K562 (cell line): ENCODE measurements at regions of chr16 and their contacts with region 1.

Region 1: GRCh38 chr16:30874821-30875717 is 18.8 kb downstream of the BCL7C start:
- DNase-seq: peak; percentile 83 to 96 (median 88)
- ATAC-seq: peak; percentile 94
- H3K4me3 ChIP-seq: peak overlapping the region; percentile 77
- H3K27ac ChIP-seq: peak overlapping the region; percentile 88
- H3K4me1 ChIP-seq: peaks cover 13 to 36% of the 10 kb centered on the region in 2 experiments
- H3K27me3 ChIP-seq: no peaks in the 10 kb centered on the region
- CTCF ChIP-seq: peak in 2 of 3 experiments; percentile 5 to 32; a peak in 2 of 6 replicates
- EP300 ChIP-seq: peak; percentile 36; the same call in 1 of the 2 replicates
- POLR2A ChIP-seq: peak; percentile 97
- RAD21 ChIP-seq: peak in 1 of 2 experiments; percentile 6; a peak in 1 of 4 replicates

Region 2: GRCh38 chr16:30382111-30382881 is 492.8 kb before region 1 on chr16 and contains the start of gene SEPTIN1:
- CTCF ChIA-PET with region 1: no interaction called
- POLR2A ChIA-PET with region 1: no interaction called
- in situ Hi-C with region 1: no loop called
- intact Hi-C with region 1: no loop called
- DNase-seq: peak in 1 of 4 experiments; percentile 7
- ATAC-seq: no peak
- H3K4me3 ChIP-seq: no peak within 1 kb of the TSS
- H3K27ac ChIP-seq: peak within 1 kb of the TSS; percentile 91
- H3K4me1 ChIP-seq: peaks cover 34 to 50% of the 10 kb centered on the region in 2 experiments
- H3K27me3 ChIP-seq: no peaks in the 10 kb centered on the region
- CTCF ChIP-seq: no peak
- EP300 ChIP-seq: no peak
- POLR2A ChIP-seq: no peak
- RAD21 ChIP-seq: no peak
- polyA plus RNA-seq, gene SEPTIN1: 0.23 TPM in 1 of 2 experiments, not detected in the other

Region 3: DNA sequence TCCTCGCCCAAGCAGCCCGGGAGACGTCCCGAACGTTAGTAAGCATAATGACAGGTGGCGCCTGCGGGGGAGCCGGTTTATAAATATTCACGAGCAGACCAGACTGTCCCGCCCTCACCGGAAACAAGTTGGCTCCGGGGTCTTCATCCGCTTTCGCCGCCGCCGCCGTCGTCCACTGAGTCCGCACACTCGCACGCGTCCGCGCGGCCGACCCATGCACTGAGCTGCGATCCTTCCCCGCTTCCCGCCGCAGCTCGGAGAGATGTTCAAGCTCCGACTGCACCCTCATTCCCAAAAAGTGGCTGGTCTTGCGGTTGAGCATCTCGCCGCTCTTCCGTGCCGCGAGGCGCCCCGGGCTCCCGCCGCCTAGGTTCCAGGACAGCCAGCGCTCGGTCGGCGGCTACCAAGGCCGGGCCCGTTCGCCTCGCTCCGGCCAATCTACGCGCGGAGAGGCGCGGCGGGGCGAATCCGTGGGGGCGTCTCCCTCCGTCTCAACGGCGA is 113.6 kb before region 1 on chr16:
- CTCF ChIA-PET with region 1: no interaction called
- POLR2A ChIA-PET with region 1: no interaction called
- in situ Hi-C with region 1: no loop called
- intact Hi-C with region 1: no loop called
- DNase-seq: peak; percentile 54 to 81 (median 63)
- ATAC-seq: peak; percentile 70
- H3K4me3 ChIP-seq: peak overlapping the region; percentile 88
- H3K27ac ChIP-seq: peak overlapping the region; percentile 54
- H3K4me1 ChIP-seq: peaks cover 19 to 47% of the 10 kb centered on the region in 2 experiments; a peak in 4 of 5 replicates
- H3K27me3 ChIP-seq: no peaks in the 10 kb centered on the region
- CTCF ChIP-seq: no peak
- EP300 ChIP-seq: no peak
- POLR2A ChIP-seq: 0 out of 2 replicates have a peak, but pooled peaks have one; percentile 16
- RAD21 ChIP-seq: no peak

Region 4: GRCh38 chr16:30805370-30806169 is 69.5 kb before region 1 on chr16:
- CTCF ChIA-PET with region 1: no interaction called
- POLR2A ChIA-PET with region 1: no interaction called
- in situ Hi-C with region 1: no loop called
- intact Hi-C with region 1: loop called (anchors 5 kb)
- DNase-seq: peak; percentile 87 to 90 (median 89)
- ATAC-seq: peak; percentile 91
- H3K4me3 ChIP-seq: peak overlapping the region; percentile 75
- H3K27ac ChIP-seq: peak overlapping the region; percentile 81
- H3K4me1 ChIP-seq: peaks cover 20 to 36% of the 10 kb centered on the region in 2 experiments
- H3K27me3 ChIP-seq: no peaks in the 10 kb centered on the region
- CTCF ChIP-seq: no peak
- EP300 ChIP-seq: peak; percentile 33; the same call in 1 of the 2 replicates
- POLR2A ChIP-seq: peak; percentile 88
- RAD21 ChIP-seq: peak; percentile 11 to 20; a peak in 1 of 4 replicates

Region 5: GRCh38 chr16:30858111-30858495 is 17.0 kb before region 1 on chr16:
- CTCF ChIA-PET with region 1: no interaction called
- POLR2A ChIA-PET with region 1: interaction called, 14 read pairs
- in situ Hi-C with region 1: no loop called
- intact Hi-C with region 1: no loop called
- DNase-seq: no peak
- ATAC-seq: no peak
- H3K4me3 ChIP-seq: no peak overlapping the region
- H3K27ac ChIP-seq: no peak overlapping the region
- H3K4me1 ChIP-seq: peaks cover 0 to 6% of the 10 kb centered on the region in 2 experiments; a peak in 4 of 5 replicates
- H3K27me3 ChIP-seq: no peaks in the 10 kb centered on the region
- CTCF ChIP-seq: no peak
- EP300 ChIP-seq: no peak
- POLR2A ChIP-seq: no peak
- RAD21 ChIP-seq: no peak

Region 6: DNA sequence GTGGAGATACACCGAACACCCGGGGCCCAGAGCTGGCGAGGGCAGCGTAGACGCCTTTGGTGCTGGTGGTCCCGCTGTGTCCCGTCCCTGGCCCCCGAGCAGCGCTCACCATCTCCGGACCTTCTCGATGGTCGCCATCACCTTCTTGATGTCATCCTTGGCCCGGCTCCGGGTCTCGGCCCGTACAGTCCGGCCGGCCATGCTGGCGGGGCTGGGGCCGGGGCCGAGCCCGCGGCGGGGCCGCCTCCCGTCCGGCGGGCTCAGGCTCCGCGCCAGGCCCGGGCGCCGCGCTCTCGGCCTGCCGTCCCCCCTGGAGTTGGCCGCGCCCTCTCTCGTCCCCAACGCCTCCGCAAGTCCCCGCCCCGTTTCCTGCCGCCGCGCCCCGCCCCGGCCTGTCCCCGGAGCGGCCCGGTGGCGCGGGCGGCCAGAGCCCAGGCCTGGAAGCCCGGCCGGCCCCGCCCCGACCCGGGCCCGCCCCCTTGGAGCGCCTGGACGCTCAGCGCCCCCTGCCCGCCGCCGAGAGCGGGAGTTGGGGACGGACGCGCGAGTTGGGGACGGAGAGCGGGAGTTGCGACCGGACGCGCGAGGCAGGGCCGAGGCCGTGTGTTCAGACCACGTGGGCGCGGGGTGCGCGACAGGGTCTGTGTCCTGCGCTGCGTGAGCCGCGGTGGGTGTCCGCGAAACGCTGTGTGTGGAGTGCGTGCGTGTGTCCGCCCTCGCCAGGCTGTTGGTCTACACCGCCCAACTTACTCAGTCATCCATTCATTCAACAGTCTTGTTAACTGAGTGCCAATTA is 18.9 kb after region 1 on chr16 and contains the start of gene BCL7C:
- CTCF ChIA-PET with region 1: no interaction called
- POLR2A ChIA-PET with region 1: interaction called, 12 read pairs
- in situ Hi-C with region 1: no loop called
- intact Hi-C with region 1: loop called (anchors 2 kb)
- DNase-seq: peak; percentile 91 to 95 (median 92)
- ATAC-seq: peak; percentile 86
- H3K4me3 ChIP-seq: peak within 1 kb of the TSS; percentile 67
- H3K27ac ChIP-seq: peak within 1 kb of the TSS; percentile 90
- H3K4me1 ChIP-seq: peaks cover 35 to 47% of the 10 kb centered on the region in 2 experiments
- H3K27me3 ChIP-seq: no peaks in the 10 kb centered on the region
- CTCF ChIP-seq: peak; percentile 41 to 75 (median 59); a peak in 5 of 6 replicates
- EP300 ChIP-seq: no peak
- POLR2A ChIP-seq: peak; percentile 76
- RAD21 ChIP-seq: peak; percentile 37 to 52
- polyA plus RNA-seq, gene BCL7C: 1.7 to 2.6 TPM

Region 7: DNA sequence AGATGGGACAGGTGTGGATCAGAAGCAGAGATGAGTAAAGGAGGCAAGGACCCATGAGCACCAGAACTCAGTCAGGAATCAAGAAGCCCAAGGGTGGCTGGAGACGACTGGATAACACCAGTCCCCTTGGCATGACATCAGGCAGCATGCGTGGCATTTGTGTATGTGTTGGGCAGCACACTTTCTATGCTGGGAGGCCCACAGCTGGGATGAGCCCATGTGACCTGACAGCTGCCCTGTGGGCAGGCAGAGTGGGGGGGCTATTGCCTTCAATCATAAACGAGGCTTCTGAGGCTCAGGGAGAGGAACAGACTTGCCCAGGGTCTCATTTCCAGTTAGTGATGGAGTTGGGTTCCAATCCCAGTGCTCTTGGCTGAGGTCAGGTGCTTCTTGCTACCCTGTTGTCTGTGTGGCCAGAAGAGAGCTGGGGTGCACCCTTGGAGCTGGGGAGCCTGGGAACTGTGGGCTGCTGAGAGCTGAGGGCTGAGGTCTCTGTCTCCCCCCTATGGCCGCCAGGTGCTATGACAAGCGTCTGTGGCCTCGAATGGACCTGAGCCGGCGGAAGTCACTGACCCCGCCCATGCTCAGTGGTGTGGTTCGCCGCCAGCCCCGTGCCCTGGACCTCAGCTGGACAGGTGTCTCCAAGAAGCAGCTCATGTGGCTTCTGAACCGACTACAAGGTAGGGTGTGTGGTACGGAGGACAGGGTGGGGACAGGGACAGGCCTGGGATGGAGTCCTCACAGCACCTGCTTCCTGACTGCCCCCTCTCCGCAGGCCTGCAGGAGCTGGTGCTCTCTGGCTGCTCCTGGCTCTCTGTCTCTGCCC is 66.7 kb after region 1 on chr16:
- CTCF ChIA-PET with region 1: no interaction called
- POLR2A ChIA-PET with region 1: no interaction called
- in situ Hi-C with region 1: no loop called
- intact Hi-C with region 1: no loop called
- DNase-seq: peak; percentile 89 to 91 (median 90)
- ATAC-seq: peak; percentile 99
- H3K4me3 ChIP-seq: no peak overlapping the region
- H3K27ac ChIP-seq: peak overlapping the region; percentile 37
- H3K4me1 ChIP-seq: peaks cover 8 to 15% of the 10 kb centered on the region in 2 experiments; a peak in 4 of 5 replicates
- H3K27me3 ChIP-seq: no peaks in the 10 kb centered on the region
- CTCF ChIP-seq: peak; percentile 93 to 98 (median 95)
- EP300 ChIP-seq: no peak
- POLR2A ChIP-seq: no peak
- RAD21 ChIP-seq: peak; percentile 78 to 83